Activated CD8-positive, alpha-beta T cell treated with anti-CD3 and anti-CD28 coated beads for 36 hours (primary cell): ENCODE measurements at regions of chr9 and their contacts with region 1.

Region 1: DNA sequence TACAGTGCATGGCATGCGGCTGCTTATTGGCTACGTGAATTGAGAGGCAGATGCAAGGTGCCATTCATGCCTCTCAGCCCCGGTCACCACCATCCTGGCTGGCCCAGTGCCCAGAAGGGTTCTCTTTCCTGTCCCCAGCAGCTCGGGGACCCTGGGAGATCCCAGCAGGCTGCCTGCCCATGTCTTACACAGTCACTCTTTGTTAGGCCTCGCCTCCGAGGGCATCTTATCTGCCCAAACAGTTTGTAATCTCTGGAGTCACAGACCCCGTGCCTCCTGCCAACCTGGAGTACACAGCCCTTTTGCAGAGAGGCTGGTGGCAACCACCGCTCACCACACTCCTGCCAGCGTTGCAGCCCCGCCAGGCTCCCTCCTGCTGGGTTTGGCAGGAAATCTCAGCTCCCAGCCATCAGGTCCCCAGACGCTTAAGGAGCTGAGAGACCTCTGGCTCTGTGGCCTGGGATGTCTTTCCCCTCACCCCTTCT is 7.0 kb upstream of the AK1 start:
- DNase-seq: no peak
- ATAC-seq: no peak
- H3K4me3 Mint-ChIP-seq: no peak overlapping the region
- H3K27ac Mint-ChIP-seq: no peak overlapping the region
- H3K4me1 Mint-ChIP-seq: peaks cover 5% of the 10 kb centered on the region
- H3K27me3 Mint-ChIP-seq: no peaks in the 10 kb centered on the region
- CTCF ChIP-seq: no peak

Region 2: GRCh38 chr9:127899128-127899946 is 14.9 kb after region 1 on chr9 and contains the start of gene ST6GALNAC6:
- CTCF ChIA-PET with region 1: no interaction called
- POLR2A ChIA-PET with region 1: interaction called, 10 read pairs
- intact Hi-C with region 1: no loop called
- DNase-seq: peak; percentile 76
- ATAC-seq: peak; percentile 78
- H3K4me3 Mint-ChIP-seq: peak within 1 kb of the TSS; percentile 82
- H3K27ac Mint-ChIP-seq: peak within 1 kb of the TSS; percentile 83
- H3K4me1 Mint-ChIP-seq: peaks cover 37% of the 10 kb centered on the region
- H3K27me3 Mint-ChIP-seq: no peaks in the 10 kb centered on the region
- CTCF ChIP-seq: no peak
- total RNA-seq, gene ST6GALNAC6: 36.9 to 38.8 TPM